Breast epithelium (tissue), 4 donors: ENCODE measurements at regions of chr16 and their contacts with region 1.

Region 1: DNA sequence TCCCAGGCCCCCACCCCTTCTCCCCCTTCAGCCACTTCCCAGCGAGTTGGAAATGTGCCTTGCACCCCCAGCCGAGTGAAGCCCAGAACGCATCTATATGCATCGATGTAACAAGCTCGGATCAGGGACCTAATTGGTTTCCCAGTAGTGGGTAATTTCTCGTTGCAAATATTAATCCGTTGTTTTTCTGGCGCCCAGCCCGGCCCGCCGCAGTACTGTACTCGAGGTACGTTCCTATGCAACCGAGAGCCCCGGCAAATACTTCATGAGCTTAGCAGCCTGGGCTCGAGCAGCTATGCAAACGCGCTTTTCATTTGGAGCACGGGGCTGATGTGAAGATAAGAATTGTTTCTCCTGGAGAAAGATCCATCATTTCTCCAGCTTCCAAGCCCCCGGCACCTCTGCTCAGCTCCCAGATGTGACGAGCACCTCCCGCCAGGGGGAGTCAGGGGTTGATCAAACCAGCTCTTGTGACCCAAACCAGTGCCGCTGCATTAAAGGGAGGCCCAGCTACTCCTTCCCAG is 229.8 kb downstream of the KATNIP start:
- DNase-seq: peak in 1 of 2 donors; percentile 30
- H3K4me3 ChIP-seq: no peak overlapping the region
- H3K27ac ChIP-seq: no peak overlapping the region
- H3K4me1 ChIP-seq: no peaks in the 10 kb centered on the region
- H3K27me3 ChIP-seq: no peaks in the 10 kb centered on the region
- CTCF ChIP-seq: no peak
- POLR2A ChIP-seq: no peak

Region 2: GRCh38 chr16:27824786-27825185 is 45.1 kb after region 1 on chr16:
- intact Hi-C with region 1: no loop called
- DNase-seq: peak in 1 of 2 donors; percentile 28
- H3K4me3 ChIP-seq: no peak overlapping the region
- H3K27ac ChIP-seq: no peak overlapping the region
- H3K4me1 ChIP-seq: no peaks in the 10 kb centered on the region
- H3K27me3 ChIP-seq: no peaks in the 10 kb centered on the region
- CTCF ChIP-seq: no peak
- POLR2A ChIP-seq: no peak

Region 3: DNA sequence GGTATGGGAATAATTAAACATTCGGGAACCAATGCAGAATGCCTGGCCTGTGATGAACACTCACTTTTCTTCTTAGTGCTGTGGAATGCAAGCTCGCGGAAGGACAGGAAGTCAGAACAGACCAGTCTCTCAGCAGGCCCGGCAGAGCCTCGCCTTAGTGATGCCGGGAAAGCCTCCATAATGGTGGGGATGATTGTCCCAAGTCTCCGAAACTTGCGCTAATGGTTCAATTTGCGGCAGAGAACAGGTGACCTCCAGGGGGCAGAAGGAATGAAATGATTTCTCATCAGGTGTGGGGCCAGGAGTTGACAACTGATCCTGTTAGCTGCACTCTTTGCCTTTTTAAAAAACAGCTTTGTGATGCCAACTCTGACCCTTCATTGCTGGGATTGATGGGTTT is 113.2 kb after region 1 on chr16:
- intact Hi-C with region 1: loop called (anchors 10 kb)
- DNase-seq: no peak
- H3K4me3 ChIP-seq: no peak overlapping the region
- H3K27ac ChIP-seq: no peak overlapping the region
- H3K4me1 ChIP-seq: no peaks in the 10 kb centered on the region
- H3K27me3 ChIP-seq: peaks cover 0 to 26% of the 10 kb centered on the region in 2 donors
- CTCF ChIP-seq: no peak
- POLR2A ChIP-seq: no peak